ENCODE measurements at regions of chr12 and their contacts with region 1.

Region 1: GRCh38 chr12:76455582-76456345 is 103.8 kb downstream of the OSBPL8 start:
- DNase-seq: peak; percentile 31
- ATAC-seq: peak; percentile 99
- H3K4me3 Mint-ChIP-seq: no peak overlapping the region
- H3K27ac Mint-ChIP-seq: no peak overlapping the region
- H3K4me1 Mint-ChIP-seq: peaks cover 33% of the 10 kb centered on the region
- H3K27me3 Mint-ChIP-seq: no peaks in the 10 kb centered on the region

Region 2: DNA sequence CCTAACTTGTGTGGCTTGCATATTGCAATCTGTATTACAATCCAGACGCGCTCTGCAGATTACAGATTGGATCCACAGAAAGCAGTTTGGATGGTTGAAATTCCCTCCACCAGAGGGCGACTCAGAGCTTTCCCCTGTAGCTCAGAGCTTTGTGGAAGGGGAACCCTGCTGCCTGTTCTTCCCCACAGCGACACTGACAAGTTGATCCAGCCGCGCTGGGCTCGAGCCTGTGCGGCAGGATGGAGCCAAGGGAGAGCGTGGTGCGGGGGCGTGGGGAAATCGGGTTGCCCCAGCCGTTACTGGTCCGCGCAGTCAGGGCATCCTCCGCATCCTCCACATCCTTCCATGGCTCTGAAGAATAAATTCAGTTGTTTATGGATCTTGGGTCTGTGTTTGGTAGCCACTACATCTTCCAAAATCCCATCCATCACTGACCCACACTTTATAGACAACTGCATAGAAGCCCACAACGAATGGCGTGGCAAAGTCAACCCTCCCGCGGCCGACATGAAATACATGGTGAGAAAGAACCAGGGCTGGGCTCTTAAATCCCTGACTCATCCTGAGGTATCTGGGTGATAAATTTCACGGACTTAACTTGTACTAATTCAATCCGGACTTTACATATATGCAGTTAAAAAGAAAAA is 1121.3 kb before region 1 on chr12 and contains the start of gene GLIPR1L1:
- CTCF ChIA-PET with region 1: no interaction called
- POLR2A ChIA-PET with region 1: no interaction called
- intact Hi-C with region 1: loop called (anchors 2 to 5 kb)
- DNase-seq: peak; percentile 91
- ATAC-seq: peak; percentile 82
- H3K4me3 Mint-ChIP-seq: peak within 1 kb of the TSS; percentile 61
- H3K27ac Mint-ChIP-seq: no peak within 1 kb of the TSS
- H3K4me1 Mint-ChIP-seq: peaks cover 25% of the 10 kb centered on the region
- H3K27me3 Mint-ChIP-seq: peaks cover 21% of the 10 kb centered on the region
- total RNA-seq, gene GLIPR1L1: not detected

Region 3: GRCh38 chr12:75526655-75527511 is 928.9 kb before region 1 on chr12:
- CTCF ChIA-PET with region 1: interaction called, 6 read pairs
- POLR2A ChIA-PET with region 1: no interaction called
- intact Hi-C with region 1: loop called (anchors 5 kb)
- DNase-seq: peak; percentile 35
- ATAC-seq: peak; percentile 69
- H3K4me3 Mint-ChIP-seq: no peak overlapping the region
- H3K27ac Mint-ChIP-seq: no peak overlapping the region
- H3K4me1 Mint-ChIP-seq: peaks cover 6% of the 10 kb centered on the region
- H3K27me3 Mint-ChIP-seq: peaks cover 27% of the 10 kb centered on the region

Region 4: GRCh38 chr12:76158518-76159321 is 297.0 kb before region 1 on chr12:
- CTCF ChIA-PET with region 1: no interaction called
- POLR2A ChIA-PET with region 1: no interaction called
- intact Hi-C with region 1: loop called in 1 of 2 experiments (anchors 5 kb)
- DNase-seq: peak; percentile 85
- ATAC-seq: peak; percentile 97
- H3K4me3 Mint-ChIP-seq: peak overlapping the region; percentile 18
- H3K27ac Mint-ChIP-seq: peak overlapping the region; percentile 26
- H3K4me1 Mint-ChIP-seq: peaks cover 15% of the 10 kb centered on the region
- H3K27me3 Mint-ChIP-seq: peaks cover 2% of the 10 kb centered on the region

Region 5: GRCh38 chr12:76183459-76184186 is 272.1 kb before region 1 on chr12:
- CTCF ChIA-PET with region 1: no interaction called
- POLR2A ChIA-PET with region 1: no interaction called
- intact Hi-C with region 1: loop called in 1 of 2 experiments (anchors 5 kb)
- DNase-seq: peak; percentile 75
- ATAC-seq: peak; percentile 94
- H3K4me3 Mint-ChIP-seq: no peak overlapping the region
- H3K27ac Mint-ChIP-seq: peak overlapping the region; percentile 68
- H3K4me1 Mint-ChIP-seq: peaks cover 12% of the 10 kb centered on the region
- H3K27me3 Mint-ChIP-seq: peaks cover 49% of the 10 kb centered on the region

Region 6: GRCh38 chr12:76586764-76587395 is 131.1 kb after region 1 on chr12:
- CTCF ChIA-PET with region 1: interaction called, 23 read pairs
- POLR2A ChIA-PET with region 1: interaction called, 3 read pairs
- intact Hi-C with region 1: no loop called
- DNase-seq: peak; percentile 44
- ATAC-seq: no peak
- H3K4me3 Mint-ChIP-seq: no peak overlapping the region
- H3K27ac Mint-ChIP-seq: no peak overlapping the region
- H3K4me1 Mint-ChIP-seq: no peaks in the 10 kb centered on the region
- H3K27me3 Mint-ChIP-seq: no peaks in the 10 kb centered on the region

Region 7: GRCh38 chr12:76952995-76953394 is 497.2 kb after region 1 on chr12:
- CTCF ChIA-PET with region 1: no interaction called
- POLR2A ChIA-PET with region 1: no interaction called
- intact Hi-C with region 1: no loop called
- DNase-seq: no peak
- ATAC-seq: no peak
- H3K4me3 Mint-ChIP-seq: no peak overlapping the region
- H3K27ac Mint-ChIP-seq: no peak overlapping the region
- H3K4me1 Mint-ChIP-seq: no peaks in the 10 kb centered on the region
- H3K27me3 Mint-ChIP-seq: peaks cover 14% of the 10 kb centered on the region

Measured in activated CD4-positive, alpha-beta T cell treated with anti-CD3 and anti-CD28 coated beads for 36 hours (primary cell).